ENCODE measurements at regions of chr12 and their contacts with region 1.

Region 1: GRCh38 chr12:89051065-89051677 is 301.1 kb downstream of the DUSP6 start:
- DNase-seq: peak; percentile 26
- H3K4me3 ChIP-seq: no peak overlapping the region
- H3K27ac ChIP-seq: no peak overlapping the region
- H3K4me1 ChIP-seq: no peaks in the 10 kb centered on the region
- H3K27me3 ChIP-seq: no peaks in the 10 kb centered on the region
- CTCF ChIP-seq: peak; percentile 83 to 92 (median 84)
- POLR2A ChIP-seq: no peak

Region 2: DNA sequence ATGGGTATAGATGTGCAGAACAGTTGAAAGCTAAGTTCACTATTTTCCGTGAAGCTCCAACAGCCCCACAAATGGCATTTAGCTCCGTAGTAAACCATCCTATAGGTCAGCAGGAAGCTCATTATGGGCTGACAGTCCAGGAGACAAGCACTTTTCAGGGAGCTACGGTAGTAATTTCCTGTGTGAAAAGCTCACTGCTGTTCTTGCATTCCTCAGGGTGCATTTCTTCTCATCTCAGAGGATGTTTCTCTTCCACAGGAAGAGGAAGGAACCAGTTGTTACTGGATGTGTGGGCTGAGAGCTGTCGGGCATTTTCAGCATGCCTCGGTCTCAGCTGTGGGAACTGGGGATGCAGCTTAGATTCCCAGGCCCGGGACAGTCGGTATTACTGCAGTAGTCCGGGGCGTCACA is 400.7 kb after region 1 on chr12:
- intact Hi-C with region 1: loop called (anchors 10 kb)
- DNase-seq: peak; percentile 33
- H3K4me3 ChIP-seq: no peak overlapping the region
- H3K27ac ChIP-seq: peak overlapping the region in 1 of 2 donors; percentile 38
- H3K4me1 ChIP-seq: peaks cover 28% of the 10 kb centered on the region
- H3K27me3 ChIP-seq: no peaks in the 10 kb centered on the region
- CTCF ChIP-seq: no peak
- POLR2A ChIP-seq: no peak

Measured in testis (tissue), 5 donors.